ENCODE measurements at regions of chr10 and their contacts with region 1.

Region 1: GRCh38 chr10:102352066-102352715 is 43.3 kb upstream of the NFKB2 start:
- DNase-seq: peak; percentile 60 to 71 (median 67)
- H3K4me3 ChIP-seq: no peak overlapping the region
- H3K4me3 Mint-ChIP-seq: no peak overlapping the region
- H3K27ac ChIP-seq: no peak overlapping the region
- H3K27ac Mint-ChIP-seq: peak overlapping the region in 1 of 7 donors; percentile 25
- H3K4me1 ChIP-seq: no peaks in the 10 kb centered on the region
- H3K4me1 Mint-ChIP-seq: peaks cover 0 to 4% (median 1%) of the 10 kb centered on the region in 4 donors
- H3K27me3 ChIP-seq: no peaks in the 10 kb centered on the region
- H3K27me3 Mint-ChIP-seq: no peaks in the 10 kb centered on the region

Region 2: DNA sequence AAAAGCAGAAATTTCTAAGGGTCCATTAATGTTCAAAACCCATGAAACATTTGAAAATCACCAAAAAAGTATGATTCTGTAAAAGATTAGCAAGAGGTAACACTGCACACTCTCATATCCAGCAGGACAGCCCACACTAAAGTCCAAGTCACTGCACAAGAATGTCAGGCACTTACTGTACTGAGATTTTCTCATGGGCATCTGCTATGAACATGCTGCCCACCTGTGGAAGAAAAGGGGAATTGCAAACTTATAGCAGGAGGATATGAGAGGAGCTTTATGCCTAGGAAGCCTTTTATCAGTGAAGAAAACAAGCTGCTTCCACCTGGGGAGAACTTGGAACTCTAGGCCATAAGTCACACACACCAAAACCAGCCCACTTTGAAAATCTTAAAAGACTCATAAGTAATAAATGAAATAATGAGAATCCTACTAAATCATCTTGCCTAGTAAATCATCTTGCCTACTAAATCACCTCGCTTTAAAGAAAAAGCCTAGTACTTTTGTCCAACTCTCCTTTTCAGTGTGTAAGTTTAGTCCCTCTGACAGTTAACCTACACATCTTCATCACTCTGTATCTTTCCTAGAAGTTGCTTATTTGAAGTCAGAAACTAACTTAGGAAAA is 342.3 kb before region 1 on chr10:
- CTCF ChIA-PET with region 1: no interaction called
- POLR2A ChIA-PET with region 1: no interaction called
- intact Hi-C with region 1: no loop called
- DNase-seq: peak; percentile 48 to 61 (median 53)
- H3K4me3 ChIP-seq: no peak overlapping the region
- H3K4me3 Mint-ChIP-seq: no peak overlapping the region
- H3K27ac ChIP-seq: no peak overlapping the region
- H3K27ac Mint-ChIP-seq: peak overlapping the region in 4 of 7 donors; percentile 3 to 67 (median 38)
- H3K4me1 ChIP-seq: no peaks in the 10 kb centered on the region
- H3K4me1 Mint-ChIP-seq: peaks cover 0 to 5% (median 4%) of the 10 kb centered on the region in 4 donors
- H3K27me3 ChIP-seq: no peaks in the 10 kb centered on the region
- H3K27me3 Mint-ChIP-seq: no peaks in the 10 kb centered on the region

Region 3: GRCh38 chr10:102132563-102133372 is 219.4 kb before region 1 on chr10 and contains the start of gene PPRC1:
- CTCF ChIA-PET with region 1: interaction called, 5 read pairs
- POLR2A ChIA-PET with region 1: no interaction called
- intact Hi-C with region 1: loop called (anchors 1 kb)
- DNase-seq: peak; percentile 97 to 99 (median 97)
- H3K4me3 ChIP-seq: peak within 1 kb of the TSS; percentile 55 to 61
- H3K4me3 Mint-ChIP-seq: peak within 1 kb of the TSS; percentile 92 to 99 (median 96)
- H3K27ac ChIP-seq: peak within 1 kb of the TSS; percentile 88
- H3K27ac Mint-ChIP-seq: peak within 1 kb of the TSS; percentile 93 to 99 (median 96)
- H3K4me1 ChIP-seq: peaks cover 38% of the 10 kb centered on the region
- H3K4me1 Mint-ChIP-seq: peaks cover 27 to 50% (median 38%) of the 10 kb centered on the region in 4 donors
- H3K27me3 ChIP-seq: no peaks in the 10 kb centered on the region
- H3K27me3 Mint-ChIP-seq: no peaks in the 10 kb centered on the region
- total RNA-seq, gene PPRC1: 38.9 to 39.8 TPM

Region 4: DNA sequence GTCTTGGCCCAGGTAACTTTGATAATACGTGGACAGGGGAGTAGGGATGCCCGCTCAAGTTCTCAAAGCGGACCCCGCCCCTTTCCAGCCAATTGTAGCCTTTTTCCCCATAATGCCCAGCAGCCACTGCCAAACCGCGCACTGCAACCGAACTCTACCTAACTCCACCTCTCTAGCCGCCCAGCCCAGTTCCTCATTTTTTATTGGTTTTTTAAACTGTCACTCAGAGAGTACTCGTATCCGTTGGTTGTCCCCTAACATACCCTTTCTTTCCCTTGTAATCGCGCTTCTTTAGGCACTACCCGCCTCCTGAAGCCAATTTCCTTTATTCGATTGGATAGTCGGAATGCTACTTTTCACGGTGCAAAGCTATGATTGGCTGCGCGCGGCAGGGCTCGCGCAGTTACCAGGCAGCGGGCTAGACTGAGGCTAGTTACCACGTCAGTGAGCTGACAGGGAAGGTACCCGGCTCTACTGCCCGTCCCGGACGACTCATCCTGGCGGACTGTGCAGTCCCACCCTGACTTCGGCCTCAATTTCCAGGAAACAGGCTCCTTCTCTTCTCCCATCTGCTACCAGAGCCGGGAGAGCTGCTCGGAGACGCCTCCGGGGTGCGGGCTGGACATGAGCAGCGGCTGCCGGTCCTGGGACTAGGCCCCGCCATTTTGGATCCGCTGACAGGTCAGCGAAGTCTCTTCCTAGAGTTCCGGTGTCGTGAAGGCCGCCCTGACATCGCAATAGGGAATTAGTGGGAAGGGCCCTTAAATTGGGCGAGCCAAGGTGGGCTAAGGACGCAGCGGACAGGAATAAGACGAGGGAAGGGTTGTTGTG is 106.9 kb before region 1 on chr10 and contains the start of gene GBF1:
- CTCF ChIA-PET with region 1: interaction called, 549 read pairs
- POLR2A ChIA-PET with region 1: interaction called, 3 read pairs
- intact Hi-C with region 1: no loop called
- DNase-seq: peak; percentile 95 to 98 (median 96)
- H3K4me3 ChIP-seq: peak within 1 kb of the TSS; percentile 51 to 94
- H3K4me3 Mint-ChIP-seq: peak within 1 kb of the TSS; percentile 84 to 99 (median 98)
- H3K27ac ChIP-seq: peak within 1 kb of the TSS; percentile 96
- H3K27ac Mint-ChIP-seq: peak within 1 kb of the TSS; percentile 89 to 98 (median 97)
- H3K4me1 ChIP-seq: peaks cover 64% of the 10 kb centered on the region
- H3K4me1 Mint-ChIP-seq: peaks cover 38 to 66% (median 50%) of the 10 kb centered on the region in 4 donors
- H3K27me3 ChIP-seq: peaks cover 6% of the 10 kb centered on the region
- H3K27me3 Mint-ChIP-seq: peaks cover 3 to 16% of the 10 kb centered on the region in 2 donors
- total RNA-seq, gene GBF1: 39.6 to 44.7 TPM

Region 5: DNA sequence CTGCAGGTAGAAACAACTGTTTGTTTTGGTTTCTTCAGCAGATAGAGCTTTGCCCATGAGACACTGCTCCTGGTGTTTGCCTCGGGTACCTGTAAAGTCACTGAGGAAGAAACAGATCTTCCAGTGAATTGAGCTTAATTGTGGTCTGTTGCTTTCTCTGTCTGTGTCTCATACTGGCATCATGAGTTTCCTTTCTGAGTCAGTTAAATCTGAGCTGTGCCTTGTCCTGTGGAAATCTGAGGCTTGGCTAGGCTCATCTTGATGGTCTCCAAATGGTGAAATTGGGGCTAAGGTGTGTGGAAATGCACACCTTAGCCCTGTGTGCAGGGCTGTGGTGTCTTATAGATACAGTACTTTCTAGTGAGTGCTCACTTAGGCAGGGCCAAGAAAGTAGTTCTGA is 39.5 kb before region 1 on chr10:
- CTCF ChIA-PET with region 1: interaction called, 17 read pairs
- POLR2A ChIA-PET with region 1: no interaction called
- intact Hi-C with region 1: no loop called
- DNase-seq: no peak
- H3K4me3 ChIP-seq: no peak overlapping the region
- H3K4me3 Mint-ChIP-seq: no peak overlapping the region
- H3K27ac ChIP-seq: no peak overlapping the region
- H3K27ac Mint-ChIP-seq: peak overlapping the region in 3 of 7 donors; percentile 21 to 53 (median 51)
- H3K4me1 ChIP-seq: peaks cover 7% of the 10 kb centered on the region
- H3K4me1 Mint-ChIP-seq: peaks cover 30 to 45% (median 34%) of the 10 kb centered on the region in 4 donors
- H3K27me3 ChIP-seq: no peaks in the 10 kb centered on the region
- H3K27me3 Mint-ChIP-seq: no peaks in the 10 kb centered on the region

Region 6: GRCh38 chr10:102334101-102334500 is 18.1 kb before region 1 on chr10:
- CTCF ChIA-PET with region 1: interaction called, 16 read pairs
- POLR2A ChIA-PET with region 1: no interaction called
- intact Hi-C with region 1: no loop called
- DNase-seq: no peak
- H3K4me3 ChIP-seq: no peak overlapping the region
- H3K4me3 Mint-ChIP-seq: no peak overlapping the region
- H3K27ac ChIP-seq: no peak overlapping the region
- H3K27ac Mint-ChIP-seq: peak overlapping the region in 2 of 7 donors; percentile 0 to 30
- H3K4me1 ChIP-seq: no peaks in the 10 kb centered on the region
- H3K4me1 Mint-ChIP-seq: peaks cover 0 to 10% (median 2%) of the 10 kb centered on the region in 4 donors
- H3K27me3 ChIP-seq: no peaks in the 10 kb centered on the region
- H3K27me3 Mint-ChIP-seq: no peaks in the 10 kb centered on the region

Region 7: DNA sequence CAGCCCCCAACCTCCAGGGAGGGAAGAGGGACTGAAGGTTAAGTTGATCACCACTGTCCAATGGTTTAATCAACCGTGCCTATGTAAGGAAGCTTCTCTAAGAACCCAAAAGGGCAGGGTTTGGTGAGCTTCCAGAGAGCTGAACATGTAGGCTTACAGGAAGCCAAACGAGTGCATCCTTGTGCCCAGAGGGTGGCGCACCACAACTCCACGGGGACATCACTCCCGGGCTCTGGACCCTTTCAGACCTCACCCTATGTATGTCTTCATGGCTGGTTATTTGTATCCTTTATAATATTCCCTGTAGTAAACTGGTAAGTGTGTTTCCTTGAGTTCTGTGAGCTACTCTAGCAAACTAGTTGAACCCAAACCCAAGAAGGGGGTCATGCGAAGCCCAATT is 31.9 kb after region 1 on chr10:
- CTCF ChIA-PET with region 1: interaction called, 17 read pairs
- POLR2A ChIA-PET with region 1: no interaction called
- intact Hi-C with region 1: no loop called
- DNase-seq: no peak
- H3K4me3 ChIP-seq: no peak overlapping the region
- H3K4me3 Mint-ChIP-seq: no peak overlapping the region
- H3K27ac ChIP-seq: no peak overlapping the region
- H3K27ac Mint-ChIP-seq: peak overlapping the region in 3 of 7 donors; percentile 25 to 55 (median 35)
- H3K4me1 ChIP-seq: no peaks in the 10 kb centered on the region
- H3K4me1 Mint-ChIP-seq: peaks cover 0 to 4% (median 2%) of the 10 kb centered on the region in 4 donors
- H3K27me3 ChIP-seq: no peaks in the 10 kb centered on the region
- H3K27me3 Mint-ChIP-seq: no peaks in the 10 kb centered on the region

Region 8: GRCh38 chr10:102555781-102556328 is 203.7 kb after region 1 on chr10:
- CTCF ChIA-PET with region 1: no interaction called
- POLR2A ChIA-PET with region 1: no interaction called
- intact Hi-C with region 1: no loop called
- DNase-seq: no peak
- H3K4me3 ChIP-seq: no peak overlapping the region
- H3K4me3 Mint-ChIP-seq: no peak overlapping the region
- H3K27ac ChIP-seq: no peak overlapping the region
- H3K27ac Mint-ChIP-seq: peak overlapping the region in 4 of 7 donors; percentile 35 to 86 (median 57)
- H3K4me1 ChIP-seq: no peaks in the 10 kb centered on the region
- H3K4me1 Mint-ChIP-seq: peaks cover 10 to 18% (median 10%) of the 10 kb centered on the region in 4 donors
- H3K27me3 ChIP-seq: no peaks in the 10 kb centered on the region
- H3K27me3 Mint-ChIP-seq: no peaks in the 10 kb centered on the region

Region 9: DNA sequence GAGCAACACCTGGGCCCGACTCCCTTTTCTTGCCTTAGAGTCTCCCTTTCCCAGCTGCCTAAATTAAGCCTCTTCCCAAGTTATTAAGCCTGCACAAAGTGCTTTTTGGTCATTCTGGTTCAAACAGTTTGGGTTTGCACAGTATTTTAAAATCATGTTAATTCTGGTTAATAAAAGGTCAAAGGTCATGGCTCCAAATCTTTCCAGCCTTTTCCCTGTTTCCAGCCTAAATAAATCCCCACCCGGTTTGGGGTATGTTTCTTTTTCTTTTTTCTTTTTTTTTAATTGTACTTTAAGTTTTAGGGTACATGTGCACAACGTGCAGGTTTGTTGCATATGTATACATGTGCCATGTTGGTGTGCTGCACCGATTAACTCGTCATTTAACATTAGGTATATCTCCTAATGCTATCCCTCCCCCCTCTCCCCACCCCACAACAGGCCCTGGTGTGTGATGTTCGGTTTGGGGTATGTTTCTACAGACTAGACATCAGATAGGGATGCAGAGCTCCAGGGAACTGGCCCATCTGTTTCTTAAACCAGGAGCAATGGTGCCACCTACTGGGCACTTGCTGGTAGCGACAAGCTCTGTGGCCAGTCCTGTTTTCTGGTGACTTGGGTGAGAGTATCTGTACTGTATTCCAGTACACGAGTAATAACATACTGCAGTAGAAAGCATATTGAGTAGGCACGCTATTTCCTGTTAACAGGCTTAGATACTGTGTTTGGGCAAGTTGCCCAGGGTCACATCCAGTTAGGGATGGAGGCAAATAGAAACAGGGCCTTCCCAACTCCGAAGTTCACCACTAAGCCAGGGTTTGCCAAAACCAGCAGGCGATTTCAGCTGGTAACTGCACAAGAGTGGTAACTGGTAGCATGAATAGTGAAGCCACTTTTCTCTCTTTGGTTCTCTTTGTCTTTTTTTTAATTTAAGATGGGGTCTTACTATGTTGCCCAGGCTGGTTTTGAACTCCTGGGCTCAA is 231.5 kb after region 1 on chr10:
- CTCF ChIA-PET with region 1: interaction called, 13 read pairs
- POLR2A ChIA-PET with region 1: no interaction called
- intact Hi-C with region 1: no loop called
- DNase-seq: peak; percentile 74 to 83 (median 76)
- H3K4me3 ChIP-seq: no peak overlapping the region
- H3K4me3 Mint-ChIP-seq: no peak overlapping the region
- H3K27ac ChIP-seq: no peak overlapping the region
- H3K27ac Mint-ChIP-seq: peak overlapping the region in 5 of 7 donors; percentile 7 to 84 (median 60)
- H3K4me1 ChIP-seq: peaks cover 8% of the 10 kb centered on the region
- H3K4me1 Mint-ChIP-seq: peaks cover 13 to 20% (median 15%) of the 10 kb centered on the region in 4 donors
- H3K27me3 ChIP-seq: no peaks in the 10 kb centered on the region
- H3K27me3 Mint-ChIP-seq: no peaks in the 10 kb centered on the region